ENCODE measurements at regions of chr6 and their contacts with region 1.

Region 1: DNA sequence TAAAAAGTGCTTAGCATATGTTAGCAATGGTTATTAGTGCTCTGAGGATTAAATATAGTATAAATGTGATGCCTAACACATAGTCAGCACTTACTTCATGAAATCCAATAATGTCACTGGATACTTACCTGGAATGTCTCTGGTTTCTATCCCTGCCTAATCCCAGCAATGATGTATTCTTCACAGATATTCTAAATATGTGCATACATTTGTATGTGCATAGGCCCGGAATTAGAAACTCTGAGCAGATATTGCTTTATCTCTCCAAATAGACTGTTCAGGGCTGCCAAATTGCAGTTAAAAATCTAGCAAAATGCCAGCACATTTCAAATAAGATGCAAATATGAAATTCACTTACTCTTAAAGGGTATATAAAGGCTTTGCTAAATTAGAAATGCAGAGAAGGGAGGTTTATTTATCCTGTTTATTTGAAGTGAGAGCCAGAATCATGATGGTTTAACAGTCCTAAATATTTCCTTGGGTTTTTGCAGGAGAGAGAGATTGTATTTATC is 81.3 kb downstream of the SAMD5 start:
- DNase-seq: no peak
- H3K4me3 ChIP-seq: no peak overlapping the region
- H3K27ac ChIP-seq: no peak overlapping the region
- H3K4me1 ChIP-seq: peaks cover 0 to 11% (median 0%) of the 10 kb centered on the region in 4 donors
- H3K27me3 ChIP-seq: no peaks in the 10 kb centered on the region
- CTCF ChIP-seq: no peak
- EP300 ChIP-seq: no peak
- POLR2A ChIP-seq: no peak

Region 2: GRCh38 chr6:146472918-146473317 is 1116.9 kb before region 1 on chr6:
- in situ Hi-C with region 1: no loop called
- intact Hi-C with region 1: loop called (anchors 5 kb)
- DNase-seq: no peak
- H3K4me3 ChIP-seq: no peak overlapping the region
- H3K27ac ChIP-seq: no peak overlapping the region
- H3K4me1 ChIP-seq: no peaks in the 10 kb centered on the region
- H3K27me3 ChIP-seq: no peaks in the 10 kb centered on the region
- CTCF ChIP-seq: no peak
- EP300 ChIP-seq: no peak
- POLR2A ChIP-seq: no peak